HEK293 (cell line): ENCODE measurements at regions of chr5 and their contacts with region 1.

Region 1: DNA sequence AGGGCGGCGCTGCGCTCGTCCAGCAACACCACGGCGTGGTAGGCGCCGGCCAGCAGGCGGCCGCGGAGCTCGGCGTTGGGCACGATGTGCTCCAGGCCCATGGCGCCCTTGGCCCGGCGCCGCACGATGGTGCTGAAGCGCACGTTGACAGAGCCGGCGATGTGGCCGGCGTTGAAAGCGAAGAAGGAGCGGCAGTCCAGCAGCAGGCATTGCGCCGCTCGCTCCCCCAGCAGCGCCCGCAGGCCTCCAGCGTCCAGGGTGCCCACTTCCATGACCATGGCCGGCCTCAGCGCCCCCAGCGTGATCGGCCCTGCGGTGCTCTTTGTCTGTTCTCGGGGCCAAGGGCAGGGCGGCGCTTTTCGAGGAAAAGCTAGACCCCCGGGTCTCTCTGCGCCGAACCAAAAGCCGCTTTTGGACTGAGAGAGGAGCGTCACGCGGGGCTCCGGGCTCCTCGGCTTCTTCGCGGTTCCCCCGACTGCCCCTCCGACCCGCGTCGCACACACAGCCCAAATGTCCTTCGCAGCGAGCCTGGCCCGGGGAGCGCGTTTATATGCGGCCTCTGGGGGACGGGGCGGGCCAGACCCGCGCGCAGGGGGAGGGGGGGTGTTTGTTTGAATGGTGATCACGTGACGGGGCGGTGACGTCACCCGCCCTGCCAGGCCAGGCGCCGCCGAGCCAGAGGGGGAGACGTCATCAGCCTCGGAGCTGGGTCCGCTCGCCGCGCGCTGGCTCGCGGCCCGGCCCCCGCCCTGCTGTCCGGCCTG is at the start of gene DUSP1:
- H3K4me3 ChIP-seq: peak within 1 kb of the TSS; percentile 89
- H3K27ac ChIP-seq: peak within 1 kb of the TSS; percentile 95
- H3K4me1 ChIP-seq: peaks cover 19% of the 10 kb centered on the region; the same call in 1 of the 2 replicates
- CTCF ChIP-seq: peak; percentile 99

Region 2: GRCh38 chr5:172646716-172647285 is 124.1 kb before region 1 on chr5:
- CTCF ChIA-PET with region 1: no interaction called
- POLR2A ChIA-PET with region 1: interaction called, 11 read pairs
- H3K4me3 ChIP-seq: no peak overlapping the region
- H3K27ac ChIP-seq: no peak overlapping the region
- H3K4me1 ChIP-seq: peaks cover 7% of the 10 kb centered on the region
- CTCF ChIP-seq: no peak; the same call in 1 of the 2 replicates

Region 3: DNA sequence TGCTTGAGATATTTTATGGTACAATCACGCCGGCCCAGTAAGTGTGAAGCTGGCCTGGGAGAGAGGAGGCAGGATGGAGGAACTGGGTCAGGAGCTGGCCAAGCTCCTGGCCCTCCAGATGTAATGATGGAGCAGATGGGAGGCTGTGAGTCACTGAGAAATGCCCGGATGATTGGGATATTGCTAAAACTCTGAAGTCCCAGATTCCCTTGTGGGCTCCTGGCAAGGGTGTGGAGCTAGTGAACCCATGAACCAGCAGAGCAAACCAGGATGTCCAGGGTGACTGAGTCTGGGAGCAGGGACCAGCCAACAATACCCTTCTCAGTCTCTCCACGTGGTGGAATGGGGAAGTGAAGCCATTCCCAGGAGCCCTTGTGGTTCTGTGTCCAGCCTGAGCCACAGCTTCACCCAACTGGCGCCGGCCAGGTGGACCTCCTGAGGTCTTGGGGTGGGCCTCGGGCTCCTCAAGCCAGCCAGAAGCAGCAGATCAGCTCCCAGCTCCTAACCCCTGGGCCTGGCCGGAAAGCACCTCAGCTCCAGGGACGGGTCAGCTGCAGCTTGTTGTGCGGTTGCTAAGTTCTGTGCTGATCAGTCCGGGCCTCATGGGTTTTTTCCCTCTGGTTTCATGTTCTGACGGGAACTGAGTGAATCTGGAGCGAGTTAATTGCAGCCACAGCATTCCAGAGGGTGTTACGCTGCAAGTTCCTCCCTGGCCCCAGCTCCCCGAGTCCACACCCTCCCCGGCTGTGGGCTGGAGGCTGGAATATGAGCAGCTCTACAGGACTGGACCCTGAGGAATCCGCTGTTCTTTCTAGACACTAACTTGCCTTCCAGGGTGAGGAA is 37.5 kb before region 1 on chr5:
- CTCF ChIA-PET with region 1: no interaction called
- POLR2A ChIA-PET with region 1: interaction called, 16 read pairs
- H3K4me3 ChIP-seq: no peak overlapping the region
- H3K27ac ChIP-seq: no peak overlapping the region
- H3K4me1 ChIP-seq: no peaks in the 10 kb centered on the region
- CTCF ChIP-seq: no peak

Region 4: DNA sequence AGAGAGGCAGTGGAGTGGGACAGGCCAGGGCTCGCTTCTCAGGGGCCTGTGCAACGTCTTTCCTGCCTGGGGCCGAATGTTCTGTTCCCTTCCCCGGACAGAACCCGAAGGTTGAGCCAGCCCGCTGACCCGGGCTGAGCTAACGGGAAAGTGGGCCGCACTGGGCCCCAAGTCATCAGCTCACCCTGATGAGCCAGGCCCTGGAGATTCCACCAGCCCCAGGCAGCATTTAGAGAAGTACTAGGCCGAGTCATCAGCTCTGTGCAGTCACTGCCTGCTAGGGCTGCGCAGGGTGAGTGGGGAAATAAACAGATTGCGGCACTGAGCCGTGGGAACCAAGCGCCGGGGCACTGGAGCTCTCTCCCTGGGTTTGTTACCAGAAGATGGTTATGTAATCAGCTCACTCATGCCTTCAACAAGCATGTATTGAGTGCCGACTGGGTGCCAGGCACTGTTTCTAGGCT is 29.3 kb after region 1 on chr5:
- CTCF ChIA-PET with region 1: interaction called, 3 read pairs
- POLR2A ChIA-PET with region 1: interaction called, 15 read pairs
- H3K4me3 ChIP-seq: no peak overlapping the region
- H3K27ac ChIP-seq: no peak overlapping the region
- H3K4me1 ChIP-seq: no peaks in the 10 kb centered on the region
- CTCF ChIP-seq: no peak

Region 5: DNA sequence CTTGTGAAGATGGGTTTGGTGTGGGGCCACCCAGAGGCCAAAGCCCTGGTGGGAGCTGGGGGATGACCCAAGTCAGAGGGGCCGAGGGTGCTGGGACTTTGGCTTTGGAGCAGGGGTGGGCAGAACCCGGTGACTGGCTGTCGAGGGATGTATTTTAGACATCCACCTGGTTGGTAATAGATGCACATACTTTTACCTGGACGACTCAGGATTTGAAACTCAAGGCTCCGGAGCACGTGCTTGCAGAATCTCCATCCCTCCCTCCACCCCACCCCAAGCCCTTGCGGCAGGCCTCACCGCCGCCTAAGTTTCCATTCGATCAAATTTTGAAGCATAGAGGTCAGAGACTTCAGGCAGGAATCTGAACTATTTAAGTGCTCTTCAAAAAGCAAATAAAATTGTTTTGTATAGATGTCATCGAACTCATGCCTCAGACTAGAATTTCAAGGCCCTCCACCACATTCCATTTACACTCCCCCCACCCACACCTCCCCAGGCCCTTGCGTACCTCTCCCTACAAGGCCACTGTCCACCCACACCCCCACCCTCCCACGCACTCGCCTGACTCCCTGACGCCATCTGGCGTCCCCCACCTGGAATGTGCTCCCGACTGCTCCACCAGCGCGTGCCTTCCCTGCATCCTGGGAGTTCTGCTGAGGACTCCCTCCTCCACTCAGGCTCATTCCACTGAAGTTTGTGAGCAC is 131.8 kb after region 1 on chr5:
- CTCF ChIA-PET with region 1: interaction called, 5 read pairs
- POLR2A ChIA-PET with region 1: interaction called, 89 read pairs
- H3K4me3 ChIP-seq: no peak overlapping the region
- H3K27ac ChIP-seq: no peak overlapping the region
- H3K4me1 ChIP-seq: peaks cover 14% of the 10 kb centered on the region; the same call in 1 of the 2 replicates
- CTCF ChIP-seq: peak; percentile 40